Ovary (tissue), 10 donors: ENCODE measurements at regions of chr12 and their contacts with region 1.

Region 1: DNA sequence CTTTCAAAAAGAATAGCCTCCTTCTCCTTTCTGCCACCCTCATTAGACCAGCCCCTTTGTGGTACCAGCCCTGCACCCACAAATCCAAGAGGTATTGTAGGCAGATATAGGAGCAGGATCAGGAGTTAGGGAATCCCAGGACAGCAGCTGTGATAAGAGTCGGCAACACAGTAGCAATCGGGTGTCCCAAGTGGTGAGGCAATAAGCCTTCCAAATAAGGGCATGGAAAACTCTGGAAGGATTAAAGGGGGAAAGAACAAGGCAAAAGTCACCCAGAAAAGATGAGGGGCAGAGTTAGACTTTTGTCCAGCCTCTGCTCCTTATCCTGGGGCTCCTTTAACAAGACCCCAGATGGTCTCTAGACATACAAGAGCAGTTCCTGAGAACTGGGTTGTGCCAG is 204.2 kb downstream of the TBX5 start:
- DNase-seq: no peak
- H3K4me3 ChIP-seq: no peak overlapping the region
- H3K27ac ChIP-seq: no peak overlapping the region
- H3K4me1 ChIP-seq: no peaks in the 10 kb centered on the region
- H3K27me3 ChIP-seq: no peaks in the 10 kb centered on the region
- CTCF ChIP-seq: no peak
- EP300 ChIP-seq: no peak
- POLR2A ChIP-seq: no peak

Region 2: GRCh38 chr12:114263056-114263805 is 61.4 kb after region 1 on chr12:
- intact Hi-C with region 1: loop called in 1 of 4 experiments (anchors 5 kb)
- DNase-seq: no peak
- H3K4me3 ChIP-seq: no peak overlapping the region
- H3K27ac ChIP-seq: no peak overlapping the region
- H3K4me1 ChIP-seq: no peaks in the 10 kb centered on the region
- H3K27me3 ChIP-seq: no peaks in the 10 kb centered on the region
- CTCF ChIP-seq: no peak
- EP300 ChIP-seq: no peak
- POLR2A ChIP-seq: no peak